Activated CD4-positive, alpha-beta T cell treated with anti-CD3 and anti-CD28 coated beads, Interleukin-2, amount 10 ng/mL, durations not matched to agents 24 days and 14 days (primary cell): ENCODE measurements at regions of chr7 and their contacts with region 1.

Region 1: GRCh38 chr7:23055582-23056178 is 41.8 kb upstream of the HYCC1 start:
- DNase-seq: peak; percentile 90
- H3K4me3 Mint-ChIP-seq: no peak overlapping the region
- H3K27ac Mint-ChIP-seq: no peak overlapping the region
- H3K4me1 Mint-ChIP-seq: peaks cover 6% of the 10 kb centered on the region
- H3K27me3 Mint-ChIP-seq: peaks cover 11% of the 10 kb centered on the region

Region 2: DNA sequence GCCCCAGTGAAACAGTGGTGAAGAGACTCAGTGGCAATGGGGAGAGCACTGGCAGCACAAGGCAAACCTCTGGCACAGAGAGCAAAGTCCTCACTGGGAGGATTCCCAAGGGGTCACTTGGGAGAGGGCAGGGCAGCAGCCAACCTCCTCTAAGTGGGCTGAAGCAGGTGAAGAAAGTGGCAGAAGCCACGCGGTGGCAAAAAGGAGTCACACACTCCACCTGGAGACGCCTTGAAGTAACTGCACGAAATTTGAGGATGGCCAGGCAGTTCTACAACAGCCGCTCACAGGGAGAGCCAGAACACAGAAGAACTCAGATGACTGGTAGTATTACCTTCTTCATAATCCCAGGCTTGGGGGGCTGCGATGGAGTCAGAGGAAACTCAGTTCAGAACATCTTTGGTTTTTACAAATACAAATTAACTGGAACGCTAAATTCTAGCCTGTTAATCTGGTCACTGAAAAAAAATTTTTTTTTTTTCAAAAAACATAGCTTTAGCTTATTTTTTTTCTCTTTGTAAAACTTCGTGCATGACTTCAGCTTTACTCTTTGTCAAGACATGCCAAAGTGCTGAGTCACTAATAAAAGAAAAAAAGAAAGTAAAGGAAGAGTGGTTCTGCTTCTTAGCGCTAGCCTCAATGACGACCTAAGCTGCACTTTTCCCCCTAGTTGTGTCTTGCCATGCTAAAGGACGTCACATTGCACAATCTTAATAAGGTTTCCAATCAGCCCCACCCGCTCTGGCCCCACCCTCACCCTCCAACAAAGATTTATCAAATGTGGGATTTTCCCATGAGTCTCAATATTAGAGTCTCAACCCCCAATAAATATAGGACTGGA is 329.1 kb before region 1 on chr7:
- intact Hi-C with region 1: loop called (anchors 5 kb)
- DNase-seq: peak; percentile 87
- H3K4me3 Mint-ChIP-seq: peak overlapping the region; percentile 68
- H3K27ac Mint-ChIP-seq: peak overlapping the region; percentile 19
- H3K4me1 Mint-ChIP-seq: peaks cover 32% of the 10 kb centered on the region
- H3K27me3 Mint-ChIP-seq: peaks cover 30% of the 10 kb centered on the region

Region 3: GRCh38 chr7:22782616-22783232 is 273.0 kb before region 1 on chr7:
- intact Hi-C with region 1: loop called (anchors 2 kb)
- DNase-seq: peak; percentile 92
- H3K4me3 Mint-ChIP-seq: no peak overlapping the region
- H3K27ac Mint-ChIP-seq: no peak overlapping the region
- H3K4me1 Mint-ChIP-seq: no peaks in the 10 kb centered on the region
- H3K27me3 Mint-ChIP-seq: peaks cover 20% of the 10 kb centered on the region

Region 4: DNA sequence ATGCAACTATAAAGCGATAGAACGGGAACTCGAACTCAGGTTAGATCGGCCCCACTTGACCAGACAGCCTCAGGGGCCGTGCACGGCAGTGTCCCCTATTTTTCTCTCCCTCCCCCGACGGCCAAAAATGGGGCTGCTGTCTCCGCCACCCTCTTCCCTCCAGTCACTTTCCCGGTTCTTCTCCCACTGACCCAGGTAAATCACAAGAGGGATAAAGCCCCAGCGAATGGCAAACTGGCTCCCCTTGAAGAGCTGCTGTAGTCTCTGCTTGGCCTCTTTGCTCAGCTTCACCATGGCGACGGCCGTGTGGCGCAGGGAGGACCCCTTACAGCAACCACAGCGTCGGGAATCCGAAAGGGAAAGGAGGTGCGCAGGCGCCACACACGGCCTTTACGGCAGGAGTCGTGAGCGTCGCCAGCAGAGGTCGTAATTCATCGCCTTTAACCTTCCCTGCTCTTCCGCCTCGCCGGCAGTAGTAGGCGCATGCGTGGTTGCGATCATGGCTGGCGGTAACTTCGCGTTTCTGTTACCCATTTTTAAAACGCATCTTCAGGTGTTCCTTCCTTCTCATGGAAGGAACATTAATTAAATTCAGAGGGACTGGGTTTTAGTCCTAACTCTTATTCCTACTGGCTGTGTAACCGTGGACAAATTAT is 233.1 kb before region 1 on chr7 and contains the start of gene TOMM7:
- intact Hi-C with region 1: loop called (anchors 1 kb)
- DNase-seq: peak; percentile 95
- H3K4me3 Mint-ChIP-seq: peak within 1 kb of the TSS; percentile 99
- H3K27ac Mint-ChIP-seq: peak within 1 kb of the TSS; percentile 97
- H3K4me1 Mint-ChIP-seq: peaks cover 32% of the 10 kb centered on the region
- H3K27me3 Mint-ChIP-seq: peaks cover 25% of the 10 kb centered on the region
- total RNA-seq, gene TOMM7: 196 and 201 TPM in 2 replicates

Region 5: DNA sequence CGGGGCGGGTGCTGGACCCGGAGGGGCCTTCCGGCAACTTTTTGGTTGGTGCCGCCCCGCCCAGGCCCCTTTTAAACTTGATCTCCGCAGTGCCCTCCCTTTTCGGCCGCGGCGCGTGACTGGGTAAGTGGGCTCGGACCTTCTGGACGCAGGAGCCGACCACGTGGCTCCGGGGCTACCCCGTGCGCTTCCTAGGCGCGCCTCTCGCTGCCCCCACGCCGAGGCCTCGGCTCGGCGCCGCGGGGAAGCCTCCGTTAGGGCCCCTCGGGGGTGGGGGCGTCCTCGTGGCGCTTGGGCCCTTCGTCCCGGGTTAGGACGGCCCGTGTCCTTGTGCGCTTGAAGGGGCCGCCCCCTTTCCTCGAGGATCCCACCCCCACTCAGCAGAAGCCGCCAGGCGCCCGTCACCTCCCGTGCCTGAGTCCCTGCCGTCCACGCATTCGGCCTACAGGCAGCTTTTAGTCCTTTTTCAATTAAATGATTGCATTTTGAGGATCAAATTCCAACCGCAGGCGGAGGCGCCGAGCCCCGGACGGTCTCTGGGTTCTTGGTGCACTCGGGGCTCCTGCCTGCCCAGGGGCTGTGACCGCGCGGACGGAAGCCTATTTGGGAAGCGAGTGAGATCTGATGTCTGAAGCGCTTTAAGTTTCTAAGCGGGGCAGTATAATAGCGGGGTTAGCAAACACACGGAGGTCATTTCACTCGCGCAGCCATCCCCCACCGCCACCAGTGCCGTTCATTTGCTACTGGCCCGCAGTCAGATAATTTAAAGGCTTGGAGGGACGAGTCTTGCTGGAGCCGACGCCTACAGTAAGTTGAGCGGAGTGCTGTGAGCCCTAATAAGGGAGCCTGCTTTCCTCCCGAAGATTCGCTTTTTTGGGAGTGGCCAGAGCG is 201.3 kb before region 1 on chr7:
- intact Hi-C with region 1: loop called (anchors 1 kb)
- DNase-seq: peak; percentile 94
- H3K4me3 Mint-ChIP-seq: peak overlapping the region; percentile 98
- H3K27ac Mint-ChIP-seq: peak overlapping the region; percentile 93
- H3K4me1 Mint-ChIP-seq: peaks cover 28% of the 10 kb centered on the region
- H3K27me3 Mint-ChIP-seq: peaks cover 1% of the 10 kb centered on the region